Prostate gland (tissue), 2 donors: ENCODE measurements at regions of chr17 and their contacts with region 1.

Region 1: GRCh38 chr17:80101011-80101945 is at the start of gene GAA:
- DNase-seq: peak; percentile 77
- H3K4me3 ChIP-seq: peak within 1 kb of the TSS; percentile 78 to 91
- H3K27ac ChIP-seq: peak within 1 kb of the TSS; percentile 92 to 93
- H3K4me1 ChIP-seq: peaks cover 3% of the 10 kb centered on the region
- H3K27me3 ChIP-seq: no peaks in the 10 kb centered on the region
- CTCF ChIP-seq: peak; percentile 88 to 99 (median 95)
- POLR2A ChIP-seq: peak; percentile 66
- total RNA-seq, gene GAA: 167 to 217 TPM

Region 2: GRCh38 chr17:80035943-80036714 is 65.1 kb before region 1 on chr17 and contains the start of gene CCDC40:
- intact Hi-C with region 1: loop called (anchors 5 kb)
- DNase-seq: peak; percentile 79
- H3K4me3 ChIP-seq: peak within 1 kb of the TSS; percentile 47 to 55
- H3K27ac ChIP-seq: peak within 1 kb of the TSS; percentile 82 to 91
- H3K4me1 ChIP-seq: peaks cover 5% of the 10 kb centered on the region
- H3K27me3 ChIP-seq: no peaks in the 10 kb centered on the region
- CTCF ChIP-seq: peak in 1 of 4 experiments; percentile 4
- POLR2A ChIP-seq: peak; percentile 74
- total RNA-seq, gene CCDC40: 11.8 to 19.7 TPM

Region 3: DNA sequence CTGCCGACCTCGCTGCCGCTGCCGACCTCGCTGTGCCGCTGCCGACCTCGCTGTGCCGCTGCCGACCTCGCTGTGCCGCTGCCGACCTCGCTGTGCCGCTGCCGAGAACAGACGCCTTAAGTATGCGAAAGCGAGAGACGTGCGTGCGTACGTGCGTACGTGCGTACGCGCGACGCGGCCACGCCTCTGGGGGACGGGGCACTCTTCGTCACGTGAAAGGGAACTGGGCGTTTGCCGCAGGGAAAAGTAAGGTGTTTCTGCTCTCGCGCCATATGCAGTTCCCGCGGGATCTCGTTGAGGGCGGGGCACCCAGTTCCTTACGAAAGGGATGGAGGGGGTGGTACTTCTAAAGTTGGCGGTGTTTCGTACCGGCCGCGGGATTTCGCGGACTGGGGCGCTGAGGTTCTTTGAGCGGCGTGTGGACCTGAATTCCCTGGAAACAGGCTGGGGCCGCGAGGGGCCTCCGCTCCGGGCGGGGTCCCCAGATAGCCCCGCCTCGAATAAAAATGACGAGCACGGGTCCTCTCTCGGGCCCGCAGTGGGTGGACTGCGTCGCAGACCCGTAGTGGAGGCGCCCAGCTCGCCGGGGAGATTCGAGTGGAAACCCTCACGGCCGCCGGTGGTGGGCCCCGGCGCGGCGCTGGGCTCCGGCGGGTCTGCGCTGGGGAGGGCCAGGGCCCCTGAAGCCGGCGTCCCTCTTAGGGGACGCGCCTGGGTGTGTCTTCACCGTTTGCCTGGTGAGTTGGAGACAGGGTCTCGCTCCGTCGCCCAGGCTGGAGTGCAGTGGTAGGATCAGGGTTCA is 46.0 kb after region 1 on chr17 and contains the start of gene EIF4A3:
- intact Hi-C with region 1: loop called (anchors 1 kb)
- DNase-seq: peak; percentile 99
- H3K4me3 ChIP-seq: peak within 1 kb of the TSS; percentile 83 to 89
- H3K27ac ChIP-seq: peak within 1 kb of the TSS; percentile 96
- H3K4me1 ChIP-seq: no peaks in the 10 kb centered on the region
- H3K27me3 ChIP-seq: no peaks in the 10 kb centered on the region
- CTCF ChIP-seq: peak in 2 of 4 experiments; percentile 33 to 42
- POLR2A ChIP-seq: peak; percentile 95
- total RNA-seq, gene EIF4A3: 69.7 to 72.9 TPM